Sciatic nerve (tissue), 2 donors: ENCODE measurements at regions of chr2 and their contacts with region 1.

Region 1: GRCh38 chr2:132776282-132776681 is 106.3 kb upstream of the LYPD1 start:
- DNase-seq: no peak
- ATAC-seq: no peak

Region 2: DNA sequence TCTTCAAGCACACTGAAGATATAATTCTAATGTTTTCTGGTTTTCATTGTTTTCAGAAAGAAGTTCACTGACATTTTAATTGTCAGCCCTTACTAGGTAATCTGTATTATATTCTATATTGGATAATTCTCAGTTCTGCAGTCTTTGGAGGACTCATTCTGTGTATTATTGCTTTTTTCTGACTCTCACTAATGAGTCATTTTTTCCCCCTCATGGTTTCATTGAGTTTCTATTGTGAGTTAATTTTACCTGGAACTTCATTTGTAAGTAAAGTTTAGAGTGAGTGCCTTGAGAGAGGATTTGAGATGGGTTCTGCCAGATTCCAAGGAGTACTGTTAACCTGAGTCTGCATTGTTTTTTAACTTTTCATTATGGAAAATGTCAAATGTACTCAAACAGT is 15.9 kb before region 1 on chr2:
- intact Hi-C with region 1: no loop called
- DNase-seq: no peak
- ATAC-seq: no peak

Region 3: DNA sequence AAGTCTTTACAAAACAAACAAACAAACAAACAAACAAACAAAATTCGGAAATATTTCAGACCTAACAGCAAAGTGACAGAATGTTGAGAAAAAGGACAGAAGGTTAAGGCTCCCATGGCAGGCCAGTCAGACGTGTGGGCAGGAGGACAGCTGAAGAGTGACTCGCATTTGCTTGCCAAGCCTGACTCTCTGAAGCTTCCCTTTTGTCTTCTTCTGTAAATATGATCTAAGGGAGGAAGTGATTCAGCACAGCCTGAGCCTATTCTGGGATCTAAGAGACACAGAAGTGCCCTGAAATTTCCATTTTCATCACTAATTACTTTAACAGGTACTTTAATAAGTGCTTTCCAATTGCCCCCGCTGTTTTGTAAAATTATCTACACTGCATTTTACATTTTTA is 27.8 kb after region 1 on chr2:
- intact Hi-C with region 1: loop called (anchors 2 kb)
- DNase-seq: no peak
- ATAC-seq: peak; percentile 73